CD14-positive monocyte (primary cell): ENCODE measurements at regions of chr3 and their contacts with region 1.

Region 1: GRCh38 chr3:186108941-186109865 is at the start of gene ETV5:
- DNase-seq: peak; percentile 97 to 98 (median 98)
- H3K4me3 ChIP-seq: peak within 1 kb of the TSS; percentile 46 to 78 (median 52)
- H3K4me3 Mint-ChIP-seq: peak within 1 kb of the TSS; percentile 89 to 97
- H3K27ac ChIP-seq: no peak within 1 kb of the TSS
- H3K27ac Mint-ChIP-seq: peak within 1 kb of the TSS in 5 of 7 donors; percentile 44 to 89 (median 75)
- H3K4me1 ChIP-seq: peaks cover 41 to 47% of the 10 kb centered on the region in 2 donors
- H3K4me1 Mint-ChIP-seq: peaks cover 45% of the 10 kb centered on the region
- H3K27me3 ChIP-seq: peaks cover 66 to 82% of the 10 kb centered on the region in 2 donors
- H3K27me3 Mint-ChIP-seq: peaks cover 75 to 87% (median 78%) of the 10 kb centered on the region in 3 donors
- CTCF ChIP-seq: no peak
- polyA plus RNA-seq, gene ETV5: 0.07 to 1.2 (median 0.88) TPM

Region 2: DNA sequence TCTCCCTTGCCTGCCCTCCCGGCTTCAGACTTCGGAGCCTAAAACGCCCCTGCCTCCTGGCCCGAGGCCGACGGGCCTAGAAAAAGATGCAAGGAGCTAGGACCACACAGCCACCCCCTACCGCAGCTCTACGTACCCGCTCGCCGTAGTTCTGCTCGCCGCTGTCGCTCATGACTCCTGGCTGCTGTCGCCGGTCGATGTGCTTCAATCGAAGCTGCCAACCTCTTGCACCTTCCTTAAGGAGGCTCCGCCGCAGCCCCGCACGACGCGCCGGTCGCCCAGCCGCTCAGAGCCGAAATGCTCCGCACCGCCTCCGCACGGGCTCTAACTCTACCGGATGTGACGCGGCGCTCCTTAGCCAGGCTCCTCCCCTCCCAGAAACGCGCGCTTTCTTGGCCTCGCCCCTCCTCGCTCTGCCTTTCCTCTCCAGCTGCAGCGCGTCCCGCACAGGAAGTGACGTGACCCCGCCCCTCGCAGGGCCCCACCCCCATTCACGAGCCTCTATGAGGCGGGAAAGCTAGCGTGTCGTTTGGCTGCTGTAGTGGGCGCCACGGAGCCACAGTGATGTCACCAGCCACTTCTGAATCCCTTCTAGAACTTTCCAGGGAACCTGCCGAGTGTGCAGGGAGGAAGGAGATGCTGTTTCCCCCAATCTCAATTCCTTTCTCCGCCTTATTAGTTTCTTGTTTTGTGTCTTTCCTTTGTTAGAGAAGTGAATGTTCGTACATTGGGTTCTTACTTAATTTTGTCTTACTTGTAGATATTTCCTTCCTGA is 171.3 kb before region 1 on chr3 and contains the start of gene TRA2B:
- intact Hi-C with region 1: loop called in 1 of 2 experiments (anchors 5 kb)
- DNase-seq: peak; percentile 98 to 99 (median 99)
- H3K4me3 ChIP-seq: peak within 1 kb of the TSS; percentile 76 to 100 (median 99)
- H3K4me3 Mint-ChIP-seq: peak within 1 kb of the TSS; percentile 100
- H3K27ac ChIP-seq: peak within 1 kb of the TSS; percentile 97 to 99
- H3K27ac Mint-ChIP-seq: peak within 1 kb of the TSS; percentile 100
- H3K4me1 ChIP-seq: peaks cover 32 to 39% of the 10 kb centered on the region in 2 donors
- H3K4me1 Mint-ChIP-seq: peaks cover 37% of the 10 kb centered on the region
- H3K27me3 ChIP-seq: no peaks in the 10 kb centered on the region
- H3K27me3 Mint-ChIP-seq: peaks cover 0 to 4% (median 0%) of the 10 kb centered on the region in 3 donors
- CTCF ChIP-seq: peak; percentile 44
- polyA plus RNA-seq, gene TRA2B: 99.9 to 507 (median 121) TPM

Region 3: GRCh38 chr3:186152889-186153292 is 43.7 kb after region 1 on chr3:
- intact Hi-C with region 1: loop called in 1 of 2 experiments (anchors 5 kb)
- DNase-seq: peak; percentile 77 to 89 (median 82)
- H3K4me3 ChIP-seq: no peak overlapping the region
- H3K4me3 Mint-ChIP-seq: no peak overlapping the region
- H3K27ac ChIP-seq: peak overlapping the region in 1 of 2 donors; percentile 53
- H3K27ac Mint-ChIP-seq: peak overlapping the region; percentile 72 to 89 (median 87)
- H3K4me1 ChIP-seq: peaks cover 39 to 45% of the 10 kb centered on the region in 2 donors
- H3K4me1 Mint-ChIP-seq: peaks cover 45% of the 10 kb centered on the region
- H3K27me3 ChIP-seq: no peaks in the 10 kb centered on the region
- H3K27me3 Mint-ChIP-seq: peaks cover 7 to 21% (median 14%) of the 10 kb centered on the region in 3 donors
- CTCF ChIP-seq: no peak

Region 4: DNA sequence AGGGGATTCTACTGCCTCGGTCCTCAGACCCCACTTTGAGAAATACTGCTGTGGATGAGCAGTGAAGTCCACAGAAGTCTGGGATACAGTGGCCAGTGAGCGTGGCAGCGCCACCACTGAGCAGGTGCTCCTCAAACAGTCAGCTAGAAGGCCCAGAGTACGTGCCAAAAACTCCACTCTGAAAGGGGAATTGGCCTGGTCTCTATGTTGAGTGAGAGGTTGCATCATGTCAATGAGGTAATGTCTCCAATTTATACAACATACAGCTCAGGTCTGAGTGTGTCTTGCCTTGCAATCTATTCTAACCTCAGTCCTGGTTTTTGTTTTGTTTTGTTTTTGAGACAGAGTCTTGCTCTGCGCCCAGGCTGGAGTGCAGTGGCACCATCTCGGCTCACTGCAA is 53.0 kb after region 1 on chr3:
- intact Hi-C with region 1: loop called in 1 of 2 experiments (anchors 5 kb)
- DNase-seq: peak; percentile 16 to 93 (median 84)
- H3K4me3 ChIP-seq: no peak overlapping the region
- H3K4me3 Mint-ChIP-seq: peak overlapping the region in 1 of 2 donors; percentile 54
- H3K27ac ChIP-seq: no peak overlapping the region
- H3K27ac Mint-ChIP-seq: peak overlapping the region in 6 of 7 donors; percentile 59 to 88 (median 76)
- H3K4me1 ChIP-seq: peaks cover 0 to 11% of the 10 kb centered on the region in 2 donors
- H3K4me1 Mint-ChIP-seq: peaks cover 11% of the 10 kb centered on the region
- H3K27me3 ChIP-seq: no peaks in the 10 kb centered on the region
- H3K27me3 Mint-ChIP-seq: no peaks in the 10 kb centered on the region
- CTCF ChIP-seq: no peak

Region 5: GRCh38 chr3:186342197-186342596 is 233.0 kb after region 1 on chr3:
- intact Hi-C with region 1: loop called in 1 of 2 experiments (anchors 10 kb)
- DNase-seq: peak; percentile 70 to 81 (median 71)
- H3K4me3 ChIP-seq: peak overlapping the region in 2 of 3 experiments; percentile 27 to 46
- H3K4me3 Mint-ChIP-seq: peak overlapping the region; percentile 49 to 79
- H3K27ac ChIP-seq: peak overlapping the region in 1 of 2 donors; percentile 71
- H3K27ac Mint-ChIP-seq: peak overlapping the region; percentile 84 to 96 (median 92)
- H3K4me1 ChIP-seq: peaks cover 50 to 55% of the 10 kb centered on the region in 2 donors
- H3K4me1 Mint-ChIP-seq: peaks cover 57% of the 10 kb centered on the region
- H3K27me3 ChIP-seq: no peaks in the 10 kb centered on the region
- H3K27me3 Mint-ChIP-seq: no peaks in the 10 kb centered on the region
- CTCF ChIP-seq: no peak